ENCODE measurements at regions of chr2 and their contacts with region 1.

Region 1: GRCh38 chr2:217899231-217900009 is 103.4 kb downstream of the TNS1 start:
- DNase-seq: peak in 5 of 6 donors; percentile 58 to 82 (median 78)
- ATAC-seq: peak; percentile 23 to 59 (median 34)
- H3K4me3 ChIP-seq: no peak overlapping the region
- H3K27ac ChIP-seq: peak overlapping the region; percentile 54 to 90 (median 76)
- H3K4me1 ChIP-seq: peaks cover 67 to 73% (median 70%) of the 10 kb centered on the region in 3 donors
- H3K27me3 ChIP-seq: no peaks in the 10 kb centered on the region
- CTCF ChIP-seq: peak; percentile 44 to 58 (median 50)

Region 2: GRCh38 chr2:217993817-217994463 is 94.5 kb after region 1 on chr2:
- intact Hi-C with region 1: loop called in 1 of 3 experiments (anchors 5 kb)
- DNase-seq: peak; percentile 69 to 93 (median 76)
- ATAC-seq: peak; percentile 58 to 81 (median 72)
- H3K4me3 ChIP-seq: peak overlapping the region in 2 of 4 donors; percentile 17 to 32
- H3K27ac ChIP-seq: peak overlapping the region in 3 of 4 donors; percentile 75 to 89 (median 84)
- H3K4me1 ChIP-seq: peaks cover 14 to 33% (median 26%) of the 10 kb centered on the region in 3 donors
- H3K27me3 ChIP-seq: no peaks in the 10 kb centered on the region
- CTCF ChIP-seq: peak; percentile 51 to 77 (median 69)

Region 3: GRCh38 chr2:218145125-218145524 is 245.7 kb after region 1 on chr2:
- intact Hi-C with region 1: no loop called
- DNase-seq: no peak
- ATAC-seq: no peak
- H3K4me3 ChIP-seq: no peak overlapping the region
- H3K27ac ChIP-seq: no peak overlapping the region
- H3K4me1 ChIP-seq: no peaks in the 10 kb centered on the region
- H3K27me3 ChIP-seq: no peaks in the 10 kb centered on the region
- CTCF ChIP-seq: no peak